ENCODE measurements at regions of chr9 and their contacts with region 1.

Region 1: DNA sequence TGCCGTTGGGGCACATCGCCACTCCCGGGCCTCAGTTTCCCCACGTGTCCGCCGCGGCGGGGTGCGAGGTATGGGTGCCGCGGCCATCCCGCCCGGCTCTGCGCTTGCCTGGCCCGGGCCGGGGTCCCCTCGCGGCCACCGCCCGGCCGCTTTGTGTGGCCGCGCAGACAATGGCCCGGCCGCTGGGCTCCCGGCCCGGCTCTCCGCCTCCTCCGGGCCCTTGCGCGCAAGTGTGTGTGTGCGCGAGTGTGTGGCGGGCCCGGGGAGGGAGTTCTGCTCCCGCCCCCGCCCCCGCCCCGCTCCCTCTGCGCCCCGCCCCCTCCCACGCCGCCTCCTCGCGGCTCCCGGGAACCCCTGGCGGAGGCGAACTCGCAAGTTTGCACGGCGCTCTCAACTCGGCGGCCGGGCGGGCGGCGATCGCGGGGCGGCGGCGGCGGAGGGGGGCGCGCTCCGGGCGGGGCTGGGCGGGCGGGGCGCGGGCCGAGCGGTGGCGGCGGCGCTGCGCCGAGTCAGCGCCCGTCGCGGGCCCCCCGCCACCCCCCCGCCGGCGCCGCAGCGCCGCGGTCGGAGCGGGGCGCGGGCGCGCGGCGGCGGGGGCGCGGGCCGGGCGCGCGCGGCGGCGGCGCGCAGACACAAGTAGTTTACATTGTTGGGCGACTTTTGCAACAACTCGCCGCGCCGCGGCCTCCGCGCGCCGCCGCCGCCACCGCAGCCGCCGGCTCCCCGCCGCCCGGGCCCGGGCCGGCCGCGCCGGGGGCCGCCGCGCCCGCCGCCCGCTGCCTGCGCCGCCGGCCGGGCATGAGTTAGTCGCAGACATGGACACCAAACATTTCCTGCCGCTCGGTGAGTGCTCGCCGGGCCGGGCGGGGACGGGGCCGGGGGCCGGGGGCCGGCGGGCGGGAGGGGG is at the start of gene RXRA:
- DNase-seq: peak; percentile 82
- H3K4me3 Mint-ChIP-seq: peak within 1 kb of the TSS; percentile 81
- H3K27ac Mint-ChIP-seq: peak within 1 kb of the TSS; percentile 61
- H3K4me1 Mint-ChIP-seq: peaks cover 43% of the 10 kb centered on the region
- H3K27me3 Mint-ChIP-seq: no peaks in the 10 kb centered on the region
- CTCF ChIP-seq: peak; percentile 16
- total RNA-seq, gene RXRA: 57.7 and 65.5 TPM in 2 replicates

Region 2: DNA sequence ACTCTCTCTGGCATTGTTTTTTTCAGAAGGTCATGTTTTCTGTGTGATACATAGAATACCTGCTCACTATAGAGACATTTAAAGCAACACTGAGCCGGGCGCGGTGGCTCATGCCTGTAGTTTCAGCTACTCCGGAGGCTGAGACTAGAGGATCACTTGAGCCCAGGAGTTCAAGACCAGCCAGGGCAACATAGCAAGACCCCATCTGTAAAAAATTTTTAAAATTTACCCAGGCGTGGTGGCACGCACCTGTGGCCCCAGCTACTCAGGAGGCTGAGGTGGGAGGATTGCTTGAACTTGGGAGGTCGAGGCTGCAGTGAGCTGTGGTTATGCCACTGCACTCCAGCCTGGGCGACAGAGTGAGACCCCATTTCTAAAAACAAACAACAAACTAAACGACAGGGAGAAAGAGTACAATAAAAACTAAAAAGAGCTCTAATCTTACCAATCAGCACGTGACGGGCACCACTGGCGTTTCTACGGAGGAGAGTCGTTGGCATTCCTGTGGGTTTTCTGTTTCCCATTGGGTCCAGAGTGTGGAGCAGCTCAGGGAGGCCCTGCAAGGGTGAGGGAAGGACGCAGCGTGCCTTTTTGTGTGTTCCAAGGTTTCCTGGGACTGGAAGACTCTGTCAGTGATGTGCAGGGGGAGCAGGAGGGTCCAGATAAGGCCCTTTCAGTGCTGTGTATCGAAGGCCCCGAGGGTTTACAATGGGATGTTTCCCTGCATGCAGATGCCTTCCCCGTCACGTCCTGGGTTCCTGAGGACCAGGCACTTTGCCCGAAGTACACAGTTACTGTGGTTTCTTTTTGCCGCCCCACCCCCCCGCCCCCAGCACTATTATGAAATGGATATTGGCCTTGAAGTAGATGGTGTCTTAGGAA is 154.5 kb before region 1 on chr9:
- CTCF ChIA-PET with region 1: interaction called, 12 read pairs
- POLR2A ChIA-PET with region 1: interaction called, 8 read pairs
- intact Hi-C with region 1: loop called (anchors 5 kb)
- DNase-seq: peak; percentile 49
- H3K4me3 Mint-ChIP-seq: no peak overlapping the region
- H3K27ac Mint-ChIP-seq: no peak overlapping the region
- H3K4me1 Mint-ChIP-seq: peaks cover 13% of the 10 kb centered on the region
- H3K27me3 Mint-ChIP-seq: peaks cover 5% of the 10 kb centered on the region
- CTCF ChIP-seq: no peak

Region 3: DNA sequence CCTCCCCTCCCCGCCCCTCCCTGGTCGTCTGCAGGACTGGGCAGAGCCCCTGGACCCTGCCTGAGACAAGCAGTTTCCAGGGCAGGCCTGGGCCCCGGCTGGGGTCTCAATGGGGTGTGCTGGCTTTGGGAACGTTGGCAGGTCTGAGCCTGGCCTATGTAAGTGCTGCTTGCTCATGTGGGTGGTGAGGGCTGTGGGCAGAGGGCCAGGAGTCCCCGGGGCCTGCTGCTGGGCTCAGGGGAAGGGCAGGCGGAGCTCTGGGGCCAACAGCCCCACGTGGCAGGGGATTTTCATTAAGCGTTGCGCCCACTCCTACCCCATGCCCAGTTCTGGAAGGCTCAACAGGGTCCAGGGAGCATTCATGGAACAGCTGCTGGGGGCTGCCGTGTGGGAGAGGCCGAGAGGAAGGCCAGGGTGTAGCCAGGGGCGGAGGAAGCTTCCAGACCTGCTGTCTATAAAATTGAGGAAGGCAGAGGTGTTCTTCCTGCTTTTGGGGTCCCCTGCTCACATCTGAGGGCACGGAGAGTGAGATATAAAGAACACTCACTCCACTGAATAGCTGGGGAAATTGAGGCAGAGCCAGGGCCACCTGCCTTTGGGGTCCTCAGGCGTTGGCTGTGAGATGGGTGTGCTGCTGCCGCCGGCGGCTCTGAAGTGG is 32.7 kb after region 1 on chr9:
- CTCF ChIA-PET with region 1: interaction called, 20 read pairs
- POLR2A ChIA-PET with region 1: interaction called, 56 read pairs
- intact Hi-C with region 1: loop called (anchors 2 kb)
- DNase-seq: peak; percentile 76
- H3K4me3 Mint-ChIP-seq: peak overlapping the region; percentile 53
- H3K27ac Mint-ChIP-seq: peak overlapping the region; percentile 95
- H3K4me1 Mint-ChIP-seq: peaks cover 51% of the 10 kb centered on the region
- H3K27me3 Mint-ChIP-seq: no peaks in the 10 kb centered on the region
- CTCF ChIP-seq: no peak

Region 4: DNA sequence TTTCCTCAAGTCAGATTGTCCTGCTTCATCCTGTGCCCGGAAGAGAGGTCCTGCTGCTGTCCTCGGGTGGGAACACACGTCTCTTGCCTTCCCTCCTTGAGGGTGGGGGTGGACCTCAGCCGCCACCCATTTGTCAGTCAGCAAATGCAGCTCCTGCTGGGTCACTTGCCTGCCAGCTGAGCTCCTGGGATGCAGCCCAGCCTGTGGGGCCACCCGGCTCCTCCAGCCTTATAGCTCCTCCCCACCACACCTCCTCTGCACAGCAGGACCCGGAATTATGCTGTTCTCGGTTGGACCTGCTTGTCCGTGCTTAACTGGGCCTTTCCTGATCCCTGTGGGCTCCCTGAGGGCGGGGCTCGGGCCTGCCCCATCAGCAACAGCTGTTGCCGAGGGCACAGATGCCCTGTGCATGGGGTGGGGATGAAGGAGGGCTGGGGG is 52.9 kb after region 1 on chr9:
- CTCF ChIA-PET with region 1: interaction called, 4 read pairs
- POLR2A ChIA-PET with region 1: interaction called, 29 read pairs
- intact Hi-C with region 1: loop called (anchors 2 kb)
- DNase-seq: peak; percentile 91
- H3K4me3 Mint-ChIP-seq: peak overlapping the region; percentile 40
- H3K27ac Mint-ChIP-seq: no peak overlapping the region
- H3K4me1 Mint-ChIP-seq: peaks cover 39% of the 10 kb centered on the region
- H3K27me3 Mint-ChIP-seq: no peaks in the 10 kb centered on the region
- CTCF ChIP-seq: no peak

Region 5: GRCh38 chr9:134443168-134444037 is 117.3 kb after region 1 on chr9:
- CTCF ChIA-PET with region 1: interaction called, 4 read pairs
- POLR2A ChIA-PET with region 1: interaction called, 7 read pairs
- intact Hi-C with region 1: loop called (anchors 1 kb)
- DNase-seq: peak; percentile 95
- H3K4me3 Mint-ChIP-seq: no peak overlapping the region
- H3K27ac Mint-ChIP-seq: no peak overlapping the region
- H3K4me1 Mint-ChIP-seq: peaks cover 12% of the 10 kb centered on the region
- H3K27me3 Mint-ChIP-seq: no peaks in the 10 kb centered on the region
- CTCF ChIP-seq: peak; percentile 97

Measured in MCF 10A (cell line).